Heart right ventricle (tissue), 16 donors: ENCODE measurements at regions of chr3 and their contacts with region 1.

Region 1: GRCh38 chr3:190747571-190747970 is 114.9 kb downstream of the GMNC start:
- DNase-seq: no peak
- ATAC-seq: no peak
- H3K4me3 ChIP-seq: no peak overlapping the region
- H3K27ac ChIP-seq: no peak overlapping the region
- H3K4me1 ChIP-seq: no peaks in the 10 kb centered on the region
- H3K27me3 ChIP-seq: no peaks in the 10 kb centered on the region
- CTCF ChIP-seq: no peak

Region 2: DNA sequence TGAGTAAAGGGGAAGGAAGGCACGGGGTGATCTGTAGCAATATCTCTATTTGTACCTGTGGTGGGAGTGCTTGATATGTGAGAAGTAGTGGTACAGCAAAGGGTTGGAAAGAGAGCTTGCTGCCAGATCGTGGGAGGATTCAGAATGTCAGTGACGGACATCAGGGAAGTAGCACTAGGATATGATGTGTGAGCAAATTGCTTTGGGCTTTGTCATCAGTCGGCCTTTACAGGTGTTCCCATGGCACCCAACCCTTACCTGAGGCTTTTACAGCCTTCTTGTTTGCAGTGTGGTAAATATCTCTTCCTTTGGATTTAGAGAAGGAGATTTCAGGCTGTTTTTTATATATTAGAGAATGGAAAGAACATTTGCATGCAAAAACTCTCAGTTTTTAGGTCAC is 203.9 kb before region 1 on chr3:
- intact Hi-C with region 1: no loop called
- DNase-seq: no peak
- ATAC-seq: no peak
- H3K4me3 ChIP-seq: no peak overlapping the region
- H3K27ac ChIP-seq: no peak overlapping the region
- H3K4me1 ChIP-seq: peaks cover 0 to 6% (median 0%) of the 10 kb centered on the region in 9 donors
- H3K27me3 ChIP-seq: no peaks in the 10 kb centered on the region
- CTCF ChIP-seq: no peak

Region 3: DNA sequence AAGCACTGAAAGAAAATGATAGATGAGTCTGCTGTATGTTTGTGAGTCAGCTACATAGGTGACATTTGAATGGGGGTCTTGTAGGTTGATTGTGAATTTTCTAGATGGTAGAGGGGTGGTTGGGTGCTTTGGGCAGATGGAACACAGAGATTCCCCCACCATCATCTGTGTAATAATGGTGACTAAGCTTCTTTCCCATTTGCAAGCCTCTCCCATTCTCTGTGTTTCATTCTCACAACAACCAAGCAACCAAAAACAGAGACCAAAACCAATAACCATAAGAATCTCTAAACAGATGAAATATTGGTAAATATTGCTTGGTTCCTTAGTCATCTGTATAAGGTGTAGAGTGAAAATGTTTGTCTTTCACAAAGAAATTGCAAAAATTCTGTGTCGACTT is 600.5 kb after region 1 on chr3:
- intact Hi-C with region 1: loop called in 1 of 10 experiments (anchors 5 kb)
- DNase-seq: no peak
- ATAC-seq: no peak
- H3K4me3 ChIP-seq: no peak overlapping the region
- H3K27ac ChIP-seq: no peak overlapping the region
- H3K4me1 ChIP-seq: peaks cover 0 to 98% (median 71%) of the 10 kb centered on the region in 9 donors
- H3K27me3 ChIP-seq: no peaks in the 10 kb centered on the region
- CTCF ChIP-seq: no peak